ENCODE measurements at regions of chr11 and their contacts with region 1.

Region 1: GRCh38 chr11:61516675-61517572 is 8.4 kb downstream of the LRRC10B start:
- DNase-seq: peak; percentile 8
- ATAC-seq: peak; percentile 54
- H3K4me3 ChIP-seq: no peak overlapping the region
- H3K27ac ChIP-seq: no peak overlapping the region
- H3K4me1 ChIP-seq: no peaks in the 10 kb centered on the region
- H3K27me3 ChIP-seq: peaks cover 3 to 8% of the 10 kb centered on the region in 2 experiments; a peak in 1 of 5 replicates
- CTCF ChIP-seq: peak; percentile 97
- EP300 ChIP-seq: no peak
- POLR2A ChIP-seq: no peak
- RAD21 ChIP-seq: peak; percentile 94

Region 2: GRCh38 chr11:61413496-61413895 is 103.4 kb before region 1 on chr11:
- CTCF ChIA-PET with region 1: no interaction called
- POLR2A ChIA-PET with region 1: no interaction called
- in situ Hi-C with region 1: no loop called
- intact Hi-C with region 1: no loop called
- DNase-seq: no peak
- ATAC-seq: no peak
- H3K4me3 ChIP-seq: no peak overlapping the region
- H3K27ac ChIP-seq: no peak overlapping the region
- H3K4me1 ChIP-seq: no peaks in the 10 kb centered on the region
- H3K27me3 ChIP-seq: no peaks in the 10 kb centered on the region
- CTCF ChIP-seq: no peak
- EP300 ChIP-seq: no peak
- POLR2A ChIP-seq: no peak
- RAD21 ChIP-seq: no peak

Region 3: DNA sequence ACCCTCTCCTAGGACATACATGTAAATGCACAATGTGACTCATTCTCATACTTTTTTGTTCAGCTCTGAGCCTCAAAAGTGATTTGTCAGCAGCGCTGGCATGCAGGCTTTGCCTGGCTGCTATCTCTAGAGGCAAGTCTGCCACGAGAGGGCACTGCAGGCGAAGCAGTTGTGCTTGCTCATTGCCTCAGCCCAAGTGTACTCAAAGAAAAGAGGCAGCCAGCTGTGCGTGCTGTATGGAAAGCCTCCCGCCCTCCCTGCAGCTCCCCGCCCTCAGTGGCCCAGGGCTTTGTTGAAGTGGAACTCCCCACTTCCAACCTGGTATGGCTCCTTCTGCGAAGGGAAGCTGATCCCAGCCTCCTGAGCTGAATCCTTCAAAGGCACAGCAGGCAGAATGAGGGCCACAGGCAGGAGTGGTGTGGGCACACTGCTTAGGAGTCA is 70.7 kb before region 1 on chr11:
- CTCF ChIA-PET with region 1: interaction called, 14 read pairs
- POLR2A ChIA-PET with region 1: interaction called, 3 read pairs
- in situ Hi-C with region 1: no loop called
- intact Hi-C with region 1: no loop called
- DNase-seq: peak; percentile 78
- ATAC-seq: peak; percentile 97
- H3K4me3 ChIP-seq: no peak overlapping the region
- H3K27ac ChIP-seq: no peak overlapping the region
- H3K4me1 ChIP-seq: peaks cover 9% of the 10 kb centered on the region; the same call in 1 of the 2 replicates
- H3K27me3 ChIP-seq: no peaks in the 10 kb centered on the region
- CTCF ChIP-seq: peak; percentile 95
- EP300 ChIP-seq: no peak
- POLR2A ChIP-seq: no peak
- RAD21 ChIP-seq: peak; percentile 78

Region 4: GRCh38 chr11:61477727-61478148 is 39.2 kb before region 1 on chr11:
- CTCF ChIA-PET with region 1: interaction called, 87 read pairs
- POLR2A ChIA-PET with region 1: no interaction called
- in situ Hi-C with region 1: loop called (anchors 5 kb)
- intact Hi-C with region 1: loop called (anchors 1 kb)
- DNase-seq: no peak
- ATAC-seq: peak; percentile 41
- H3K4me3 ChIP-seq: no peak overlapping the region
- H3K27ac ChIP-seq: no peak overlapping the region
- H3K4me1 ChIP-seq: peaks cover 27% of the 10 kb centered on the region
- H3K27me3 ChIP-seq: peaks cover 2 to 22% of the 10 kb centered on the region in 2 experiments; a peak in 4 of 5 replicates
- CTCF ChIP-seq: peak; percentile 94
- EP300 ChIP-seq: no peak
- POLR2A ChIP-seq: no peak
- RAD21 ChIP-seq: peak; percentile 94